Ascending aorta (tissue), 2 donors: ENCODE measurements at regions of chr19 and their contacts with region 1.

Region 1: GRCh38 chr19:42596391-42597072 is 1.8 kb upstream of the CEACAM8 start:
- DNase-seq: no peak
- H3K4me3 ChIP-seq: no peak overlapping the region
- H3K27ac ChIP-seq: no peak overlapping the region
- H3K4me1 ChIP-seq: no peaks in the 10 kb centered on the region
- H3K27me3 ChIP-seq: no peaks in the 10 kb centered on the region
- CTCF ChIP-seq: peak; percentile 61 to 80 (median 74)

Region 2: DNA sequence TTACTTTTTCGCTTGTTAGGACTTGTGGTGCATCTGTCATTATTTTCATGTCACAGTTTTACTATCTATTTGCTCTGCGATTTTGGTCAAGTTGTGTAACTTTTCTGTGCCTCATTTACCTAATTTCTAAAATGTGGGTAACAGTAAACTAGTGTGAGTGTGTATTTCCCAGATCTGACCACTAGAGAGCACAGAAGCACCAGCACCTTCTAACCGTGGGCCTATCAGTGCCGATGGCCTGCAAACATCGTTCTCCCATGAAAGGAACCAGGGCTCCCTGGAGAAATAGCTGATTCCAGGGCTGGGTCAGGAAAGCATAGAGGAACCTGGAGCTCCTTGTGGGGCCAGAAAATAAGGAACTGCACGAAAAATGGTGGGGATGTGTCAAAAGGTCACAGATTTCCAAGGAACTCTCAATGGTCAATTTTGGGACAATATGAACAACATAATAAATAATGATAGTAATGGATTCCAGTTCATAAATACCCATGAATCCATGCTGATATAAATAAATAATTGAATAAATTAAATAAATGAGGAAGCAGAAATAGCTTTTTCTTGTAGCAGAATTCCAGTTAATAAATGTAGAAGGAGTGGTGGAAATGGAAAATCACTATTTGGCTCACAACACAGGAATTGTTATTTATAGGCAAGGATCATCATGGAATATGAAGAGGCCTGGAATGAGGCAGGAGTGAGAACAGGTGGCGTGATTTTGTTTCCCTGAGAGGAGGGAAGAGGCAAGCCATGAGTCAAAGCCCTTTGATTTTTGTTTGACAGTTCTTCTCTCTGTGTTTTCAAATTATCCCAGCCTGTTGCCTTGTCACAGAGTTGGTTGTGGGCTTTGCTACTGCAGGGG is 33.0 kb before region 1 on chr19:
- intact Hi-C with region 1: loop called (anchors 2 kb)
- DNase-seq: no peak
- H3K4me3 ChIP-seq: no peak overlapping the region
- H3K27ac ChIP-seq: peak overlapping the region in 1 of 2 donors; percentile 22
- H3K4me1 ChIP-seq: peaks cover 0 to 7% of the 10 kb centered on the region in 2 donors
- H3K27me3 ChIP-seq: no peaks in the 10 kb centered on the region
- CTCF ChIP-seq: peak; percentile 37 to 64 (median 62)